ENCODE measurements at regions of chr12 and their contacts with region 1.

Region 1: DNA sequence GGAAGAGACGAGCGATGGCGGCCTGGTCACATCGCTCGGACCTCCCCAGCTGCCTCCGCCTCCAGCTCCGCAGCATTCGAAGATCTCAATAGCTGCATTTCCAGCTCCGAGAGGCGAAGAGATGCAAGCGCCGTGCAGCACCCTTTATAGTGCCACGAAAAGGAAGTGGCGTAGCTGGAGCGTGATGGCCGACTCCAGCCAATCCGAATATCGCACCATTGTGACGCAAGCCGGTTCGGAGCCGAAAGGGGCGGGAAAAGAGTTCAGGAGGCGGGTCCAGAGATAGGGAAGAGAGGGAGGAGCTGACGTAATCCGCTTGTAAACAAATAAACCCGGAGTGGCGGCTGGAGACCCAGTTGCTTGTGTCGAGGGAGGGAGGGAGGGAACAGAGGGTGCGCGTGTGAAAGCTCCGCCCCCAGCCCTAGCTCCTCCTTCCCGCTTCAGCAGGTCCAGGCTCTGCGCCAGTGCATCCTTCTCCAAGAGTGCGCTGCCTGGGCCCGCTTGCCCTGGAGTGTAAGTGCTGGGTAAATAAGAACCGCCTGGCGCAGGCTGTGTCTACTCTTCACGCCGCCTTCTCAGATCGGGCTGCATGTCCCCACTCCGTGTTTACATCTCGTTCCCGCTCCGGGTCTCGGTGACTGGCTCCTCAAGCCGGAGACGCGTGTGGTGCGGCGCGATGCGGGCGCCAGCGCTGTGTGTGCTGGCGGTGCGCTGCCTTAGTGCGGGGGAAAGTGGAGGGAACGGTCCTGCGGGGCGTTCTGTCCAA is at the start of gene BTG1:
- DNase-seq: peak; percentile 96 to 100 (median 98)
- ATAC-seq: peak; percentile 68
- H3K4me3 ChIP-seq: peak within 1 kb of the TSS; percentile 94
- H3K4me3 Mint-ChIP-seq: peak within 1 kb of the TSS; percentile 100
- H3K27ac ChIP-seq: peak within 1 kb of the TSS; percentile 88 to 98
- H3K27ac Mint-ChIP-seq: peak within 1 kb of the TSS; percentile 99
- H3K4me1 ChIP-seq: peaks cover 4% of the 10 kb centered on the region
- H3K4me1 Mint-ChIP-seq: peaks cover 39% of the 10 kb centered on the region
- H3K27me3 ChIP-seq: no peaks in the 10 kb centered on the region
- H3K27me3 Mint-ChIP-seq: peaks cover 15% of the 10 kb centered on the region
- CTCF ChIP-seq: no peak
- total RNA-seq, gene BTG1: 1,698 to 1,774 TPM

Region 2: DNA sequence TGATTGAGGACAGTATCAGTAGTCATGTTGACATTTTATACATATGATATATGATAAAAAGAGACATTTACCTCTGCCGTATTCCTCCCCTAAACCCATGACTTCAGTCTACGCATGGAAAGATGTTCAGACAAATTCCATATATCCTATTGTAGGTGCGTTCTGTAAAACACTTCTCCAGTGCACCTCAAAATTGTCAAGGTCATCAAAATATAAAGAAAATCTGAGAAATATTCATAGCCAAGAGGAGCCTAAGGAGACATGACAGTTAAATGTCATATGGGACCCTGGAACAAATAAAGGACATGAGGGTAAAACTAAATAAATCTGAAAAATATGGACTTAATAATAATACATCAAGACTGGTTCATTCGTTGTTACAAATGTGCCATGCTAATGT is 1262.5 kb before region 1 on chr12:
- CTCF ChIA-PET with region 1: no interaction called
- POLR2A ChIA-PET with region 1: no interaction called
- intact Hi-C with region 1: no loop called
- DNase-seq: no peak
- ATAC-seq: no peak
- H3K4me3 ChIP-seq: no peak overlapping the region
- H3K4me3 Mint-ChIP-seq: no peak overlapping the region
- H3K27ac ChIP-seq: no peak overlapping the region
- H3K27ac Mint-ChIP-seq: no peak overlapping the region
- H3K4me1 ChIP-seq: no peaks in the 10 kb centered on the region
- H3K4me1 Mint-ChIP-seq: no peaks in the 10 kb centered on the region
- H3K27me3 ChIP-seq: no peaks in the 10 kb centered on the region
- H3K27me3 Mint-ChIP-seq: no peaks in the 10 kb centered on the region
- CTCF ChIP-seq: no peak

Region 3: DNA sequence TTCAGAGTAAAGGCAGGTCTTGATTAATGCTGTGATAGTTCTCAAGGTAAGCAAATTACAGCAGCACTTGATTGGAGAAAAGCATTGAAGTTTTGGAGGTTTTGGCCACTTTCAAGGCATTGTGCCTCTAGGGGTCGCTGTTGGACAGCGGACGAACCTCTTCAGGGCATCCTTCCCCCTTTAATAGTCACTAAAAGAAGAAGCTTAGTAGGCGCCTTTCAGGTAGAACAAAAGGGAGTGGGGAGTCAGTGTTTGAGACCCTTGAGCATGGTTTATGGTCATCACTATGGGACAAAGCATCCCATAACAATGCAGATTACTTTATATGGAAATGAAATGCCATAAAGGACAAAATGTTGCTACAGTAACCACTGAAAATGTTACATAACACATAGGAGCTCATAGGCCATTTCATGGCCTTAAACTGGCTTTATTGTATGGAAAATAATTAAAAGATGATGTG is 763.8 kb before region 1 on chr12:
- CTCF ChIA-PET with region 1: interaction called, 8 read pairs
- POLR2A ChIA-PET with region 1: interaction called, 17 read pairs
- intact Hi-C with region 1: loop called (anchors 5 kb)
- DNase-seq: peak; percentile 77 to 94 (median 86)
- ATAC-seq: peak; percentile 89
- H3K4me3 ChIP-seq: peak overlapping the region; percentile 21
- H3K4me3 Mint-ChIP-seq: peak overlapping the region; percentile 81
- H3K27ac ChIP-seq: no peak overlapping the region
- H3K27ac Mint-ChIP-seq: peak overlapping the region; percentile 1
- H3K4me1 ChIP-seq: peaks cover 7% of the 10 kb centered on the region
- H3K4me1 Mint-ChIP-seq: peaks cover 5% of the 10 kb centered on the region
- H3K27me3 ChIP-seq: peaks cover 0 to 5% of the 10 kb centered on the region in 2 experiments
- H3K27me3 Mint-ChIP-seq: peaks cover 4% of the 10 kb centered on the region
- CTCF ChIP-seq: peak; percentile 90

Region 4: DNA sequence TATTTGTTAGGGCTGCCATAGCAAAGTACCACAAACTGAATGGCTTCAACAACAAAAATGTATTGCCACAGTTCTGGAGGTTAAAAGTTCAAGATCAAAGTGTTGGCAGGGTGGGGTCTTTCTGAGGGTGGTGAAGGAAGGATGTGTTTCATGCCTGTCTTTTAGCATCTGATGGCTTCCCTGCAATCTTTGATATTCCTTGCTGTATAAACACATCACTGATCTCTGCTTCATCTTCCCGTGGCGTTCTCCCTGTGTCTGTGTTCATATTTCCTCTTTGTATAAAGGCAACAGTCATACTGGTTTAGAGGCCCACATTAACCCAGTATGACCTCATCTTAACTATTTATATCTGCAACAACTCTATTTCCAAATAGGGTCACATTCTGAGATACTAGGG is 167.8 kb before region 1 on chr12:
- CTCF ChIA-PET with region 1: no interaction called
- POLR2A ChIA-PET with region 1: interaction called, 10 read pairs
- intact Hi-C with region 1: loop called in 1 of 2 experiments (anchors 1 kb)
- DNase-seq: peak in 12 of 14 experiments; percentile 8 to 85 (median 44)
- ATAC-seq: peak; percentile 88
- H3K4me3 ChIP-seq: no peak overlapping the region
- H3K4me3 Mint-ChIP-seq: peak overlapping the region; percentile 3
- H3K27ac ChIP-seq: peak overlapping the region; percentile 2 to 52
- H3K27ac Mint-ChIP-seq: peak overlapping the region; percentile 79
- H3K4me1 ChIP-seq: peaks cover 24% of the 10 kb centered on the region
- H3K4me1 Mint-ChIP-seq: peaks cover 55% of the 10 kb centered on the region
- H3K27me3 ChIP-seq: no peaks in the 10 kb centered on the region
- H3K27me3 Mint-ChIP-seq: no peaks in the 10 kb centered on the region
- CTCF ChIP-seq: no peak

Region 5: GRCh38 chr12:92049403-92049802 is 96.5 kb before region 1 on chr12:
- CTCF ChIA-PET with region 1: no interaction called
- POLR2A ChIA-PET with region 1: interaction called, 66 read pairs
- intact Hi-C with region 1: no loop called
- DNase-seq: no peak
- ATAC-seq: no peak
- H3K4me3 ChIP-seq: no peak overlapping the region
- H3K4me3 Mint-ChIP-seq: no peak overlapping the region
- H3K27ac ChIP-seq: no peak overlapping the region
- H3K27ac Mint-ChIP-seq: peak overlapping the region; percentile 84
- H3K4me1 ChIP-seq: peaks cover 23% of the 10 kb centered on the region
- H3K4me1 Mint-ChIP-seq: peaks cover 65% of the 10 kb centered on the region
- H3K27me3 ChIP-seq: no peaks in the 10 kb centered on the region
- H3K27me3 Mint-ChIP-seq: no peaks in the 10 kb centered on the region
- CTCF ChIP-seq: no peak

Region 6: DNA sequence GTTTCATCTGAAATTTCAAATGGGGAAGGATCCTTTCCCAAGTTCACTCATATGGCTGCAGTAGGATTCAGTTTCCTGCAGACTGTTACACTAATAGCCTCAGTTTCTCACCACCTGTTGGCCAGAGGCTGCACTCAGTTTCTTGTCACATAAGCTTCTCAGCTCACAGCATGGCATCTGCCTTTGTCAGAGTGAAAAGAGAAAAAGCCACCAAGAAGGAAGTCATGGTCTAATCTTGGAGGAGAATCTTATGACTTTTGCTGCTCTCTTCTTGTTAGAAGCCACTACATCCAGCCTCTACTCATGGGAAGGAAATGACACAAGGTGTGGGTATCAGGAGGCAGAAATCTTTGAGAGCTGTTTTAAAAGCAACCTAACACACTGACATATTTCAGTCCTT is 39.1 kb after region 1 on chr12:
- CTCF ChIA-PET with region 1: no interaction called
- POLR2A ChIA-PET with region 1: interaction called, 12 read pairs
- intact Hi-C with region 1: loop called in 1 of 2 experiments (anchors 2 kb)
- DNase-seq: peak in 5 of 14 experiments; percentile 1 to 79 (median 66)
- ATAC-seq: peak; percentile 92
- H3K4me3 ChIP-seq: no peak overlapping the region
- H3K4me3 Mint-ChIP-seq: peak overlapping the region; percentile 67
- H3K27ac ChIP-seq: peak overlapping the region; percentile 43 to 54
- H3K27ac Mint-ChIP-seq: peak overlapping the region; percentile 84
- H3K4me1 ChIP-seq: peaks cover 14% of the 10 kb centered on the region
- H3K4me1 Mint-ChIP-seq: peaks cover 59% of the 10 kb centered on the region
- H3K27me3 ChIP-seq: no peaks in the 10 kb centered on the region
- H3K27me3 Mint-ChIP-seq: no peaks in the 10 kb centered on the region
- CTCF ChIP-seq: no peak

Region 7: GRCh38 chr12:92356425-92356824 is 210.5 kb after region 1 on chr12:
- CTCF ChIA-PET with region 1: no interaction called
- POLR2A ChIA-PET with region 1: interaction called, 19 read pairs
- intact Hi-C with region 1: loop called in 1 of 2 experiments (anchors 1 kb)
- DNase-seq: no peak
- ATAC-seq: no peak
- H3K4me3 ChIP-seq: no peak overlapping the region
- H3K4me3 Mint-ChIP-seq: no peak overlapping the region
- H3K27ac ChIP-seq: no peak overlapping the region
- H3K27ac Mint-ChIP-seq: no peak overlapping the region
- H3K4me1 ChIP-seq: peaks cover 9% of the 10 kb centered on the region
- H3K4me1 Mint-ChIP-seq: peaks cover 64% of the 10 kb centered on the region
- H3K27me3 ChIP-seq: no peaks in the 10 kb centered on the region
- H3K27me3 Mint-ChIP-seq: no peaks in the 10 kb centered on the region
- CTCF ChIP-seq: no peak

Region 8: DNA sequence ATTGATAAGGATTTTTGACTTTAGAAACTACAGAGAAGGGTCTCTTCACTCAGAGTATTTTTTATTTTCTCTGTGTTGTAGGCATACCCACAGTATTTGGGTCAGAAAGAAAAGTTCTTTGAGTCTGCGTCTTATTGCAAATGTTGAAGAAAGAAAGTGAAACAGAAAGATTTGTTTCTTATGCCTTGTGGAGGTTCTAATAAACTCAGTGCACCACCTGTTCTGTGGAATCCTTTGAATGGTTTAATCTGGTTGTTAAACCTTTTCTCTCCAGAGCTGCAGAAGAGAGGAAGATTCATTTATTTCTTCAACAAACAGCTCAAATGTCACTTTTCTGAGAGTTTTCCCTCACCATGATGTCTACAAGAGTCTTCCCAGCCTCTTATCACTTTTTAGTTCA is 410.2 kb after region 1 on chr12:
- CTCF ChIA-PET with region 1: no interaction called
- POLR2A ChIA-PET with region 1: interaction called, 21 read pairs
- intact Hi-C with region 1: no loop called
- DNase-seq: peak in 3 of 14 experiments; percentile 45 to 65 (median 46)
- ATAC-seq: peak; percentile 55
- H3K4me3 ChIP-seq: peak overlapping the region; percentile 21
- H3K4me3 Mint-ChIP-seq: peak overlapping the region; percentile 62
- H3K27ac ChIP-seq: peak overlapping the region in 1 of 2 donors; percentile 33
- H3K27ac Mint-ChIP-seq: peak overlapping the region; percentile 80
- H3K4me1 ChIP-seq: peaks cover 19% of the 10 kb centered on the region
- H3K4me1 Mint-ChIP-seq: peaks cover 39% of the 10 kb centered on the region
- H3K27me3 ChIP-seq: no peaks in the 10 kb centered on the region
- H3K27me3 Mint-ChIP-seq: no peaks in the 10 kb centered on the region
- CTCF ChIP-seq: no peak

Region 9: DNA sequence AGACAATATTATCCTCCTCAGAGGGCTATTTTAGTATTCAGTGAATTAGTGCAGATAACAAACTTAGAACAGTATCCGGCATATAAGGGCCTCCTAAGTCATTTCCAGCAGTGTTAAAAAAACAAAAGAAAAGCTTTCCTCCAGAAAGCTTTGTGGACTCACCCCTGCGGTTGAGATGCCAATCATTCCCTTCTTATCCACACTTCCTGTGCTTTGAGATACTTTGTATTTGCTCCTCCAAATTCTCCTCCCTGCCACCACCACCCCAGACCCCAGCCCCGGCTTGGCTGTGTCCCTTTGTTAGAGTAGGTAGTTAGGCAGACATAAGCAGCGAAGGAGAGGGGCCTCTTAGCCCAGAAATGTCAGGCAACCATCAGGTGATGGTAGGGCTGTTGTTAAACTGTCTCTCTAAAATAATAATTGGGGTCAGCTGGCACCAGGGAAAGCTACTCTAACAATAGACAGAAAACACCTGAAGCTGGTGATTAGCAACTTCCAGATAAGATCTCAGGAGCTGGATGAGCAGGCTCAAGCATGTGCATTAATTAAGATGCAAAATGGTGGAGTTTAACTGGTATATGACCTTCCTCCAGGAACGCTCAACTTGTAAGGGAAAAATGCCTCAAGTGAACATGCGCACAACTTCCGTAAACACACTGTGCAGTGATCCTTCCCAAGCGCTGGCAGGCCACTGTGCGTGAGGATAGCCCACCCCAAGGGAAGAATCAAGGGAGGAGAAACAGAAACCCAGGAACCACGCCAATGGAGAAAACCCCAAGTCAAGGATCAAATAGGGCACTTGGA is 935.3 kb after region 1 on chr12:
- CTCF ChIA-PET with region 1: no interaction called
- POLR2A ChIA-PET with region 1: no interaction called
- intact Hi-C with region 1: no loop called
- DNase-seq: no peak
- ATAC-seq: no peak
- H3K4me3 ChIP-seq: no peak overlapping the region
- H3K4me3 Mint-ChIP-seq: no peak overlapping the region
- H3K27ac ChIP-seq: no peak overlapping the region
- H3K27ac Mint-ChIP-seq: no peak overlapping the region
- H3K4me1 ChIP-seq: no peaks in the 10 kb centered on the region
- H3K4me1 Mint-ChIP-seq: no peaks in the 10 kb centered on the region
- H3K27me3 ChIP-seq: no peaks in the 10 kb centered on the region
- H3K27me3 Mint-ChIP-seq: no peaks in the 10 kb centered on the region
- CTCF ChIP-seq: no peak